Panc1 (cell line): ENCODE measurements at regions of chr13 and their contacts with region 1.

Region 1: DNA sequence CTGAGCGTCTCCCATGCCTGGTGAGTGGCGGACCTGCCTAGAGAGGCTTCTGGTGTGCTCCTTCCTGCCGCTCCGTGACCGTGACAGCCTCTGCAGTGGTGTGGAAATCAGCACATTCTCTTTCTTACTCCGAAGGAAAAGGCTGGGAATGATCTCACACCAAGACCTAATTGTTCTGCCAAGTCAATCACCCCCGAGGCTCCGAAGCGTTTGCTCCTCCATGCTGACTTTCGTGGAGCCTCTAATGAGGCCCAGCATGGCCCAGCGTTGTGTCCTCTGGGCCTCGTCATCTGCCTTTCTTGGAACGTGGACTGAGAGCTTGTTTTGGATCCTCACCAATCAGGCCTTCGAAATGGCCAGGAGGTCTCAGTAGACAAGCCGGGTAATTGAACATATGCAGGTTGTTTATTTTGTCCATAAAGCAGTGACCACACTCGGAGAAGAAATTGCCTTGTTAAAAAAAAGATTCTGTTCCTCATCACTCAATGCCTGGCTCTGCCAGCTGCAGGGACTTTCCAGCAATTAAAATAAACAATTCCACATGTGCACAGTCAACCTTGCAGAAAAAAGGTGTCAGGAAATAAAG is 107.1 kb downstream of the UBL3 start:
- DNase-seq: no peak
- ATAC-seq: no peak
- H3K4me3 ChIP-seq: no peak overlapping the region
- H3K27ac ChIP-seq: no peak overlapping the region
- H3K4me1 ChIP-seq: no peaks in the 10 kb centered on the region
- H3K27me3 ChIP-seq: no peaks in the 10 kb centered on the region
- CTCF ChIP-seq: no peak

Region 2: GRCh38 chr13:29902101-29902952 is 159.0 kb after region 1 on chr13:
- CTCF ChIA-PET with region 1: no interaction called
- POLR2A ChIA-PET with region 1: no interaction called
- in situ Hi-C with region 1: no loop called
- intact Hi-C with region 1: no loop called
- DNase-seq: no peak
- ATAC-seq: no peak
- H3K4me3 ChIP-seq: no peak overlapping the region
- H3K27ac ChIP-seq: no peak overlapping the region
- H3K4me1 ChIP-seq: no peaks in the 10 kb centered on the region
- H3K27me3 ChIP-seq: no peaks in the 10 kb centered on the region
- CTCF ChIP-seq: no peak

Region 3: DNA sequence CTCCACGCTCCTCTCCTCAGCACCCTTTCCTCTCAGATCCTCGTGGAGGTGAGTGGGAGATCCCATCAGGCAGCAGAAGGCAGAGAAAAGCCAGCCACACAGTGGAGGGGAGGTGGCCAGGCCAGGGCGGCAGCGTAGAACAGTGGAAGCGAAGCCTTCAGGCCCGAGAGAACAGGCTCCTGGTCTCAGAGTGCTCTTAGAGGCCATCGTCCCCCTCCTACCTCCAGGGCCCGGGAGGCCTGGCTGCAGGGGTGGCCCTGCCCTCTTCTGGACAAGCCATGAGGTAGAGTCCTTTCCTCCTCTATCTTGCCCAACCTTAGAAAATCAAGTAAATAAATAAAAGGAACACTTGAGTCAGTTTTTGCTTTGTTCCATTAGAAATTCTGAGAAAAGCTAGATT is 362.1 kb after region 1 on chr13:
- CTCF ChIA-PET with region 1: no interaction called
- POLR2A ChIA-PET with region 1: interaction called, 11 read pairs
- in situ Hi-C with region 1: no loop called
- intact Hi-C with region 1: no loop called
- DNase-seq: no peak
- ATAC-seq: no peak
- H3K4me3 ChIP-seq: no peak overlapping the region
- H3K27ac ChIP-seq: no peak overlapping the region
- H3K4me1 ChIP-seq: no peaks in the 10 kb centered on the region
- H3K27me3 ChIP-seq: no peaks in the 10 kb centered on the region
- CTCF ChIP-seq: no peak